ENCODE measurements at regions of chr5 and their contacts with region 1.

Region 1: DNA sequence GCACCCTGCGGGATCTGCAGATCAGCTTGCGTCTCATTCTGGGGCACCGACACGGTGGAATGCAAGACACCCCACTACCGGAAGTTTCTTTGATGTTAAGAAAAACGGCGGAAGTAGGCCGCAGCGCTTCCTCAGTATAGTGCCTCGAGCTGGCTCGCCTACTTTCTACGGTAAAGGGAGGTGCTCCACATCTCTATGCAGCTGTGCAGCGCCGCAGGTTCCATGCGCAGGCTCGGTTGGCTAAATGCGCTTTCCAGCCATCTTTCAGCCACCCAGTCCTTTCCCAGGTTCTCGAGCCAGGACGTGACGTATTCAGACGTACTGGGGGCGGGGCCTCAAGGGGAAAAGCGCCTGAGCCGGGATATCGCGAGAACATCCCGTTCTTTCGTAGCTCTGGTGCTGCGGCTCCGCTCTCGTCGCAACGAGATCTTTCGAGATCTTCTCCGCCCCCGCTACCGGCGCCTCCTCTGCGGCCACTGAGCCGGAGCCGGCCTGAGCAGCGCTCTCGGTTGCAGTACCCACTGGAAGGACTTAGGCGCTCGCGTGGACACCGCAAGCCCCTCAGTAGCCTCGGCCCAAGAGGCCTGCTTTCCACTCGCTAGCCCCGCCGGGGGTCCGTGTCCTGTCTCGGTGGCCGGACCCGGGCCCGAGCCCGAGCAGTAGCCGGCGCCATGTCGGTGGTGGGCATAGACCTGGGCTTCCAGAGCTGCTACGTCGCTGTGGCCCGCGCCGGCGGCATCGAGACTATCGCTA is at the start of gene HSPA4:
- DNase-seq: peak; percentile 93 to 100 (median 97)
- ATAC-seq: peak; percentile 89
- H3K4me3 ChIP-seq: peak within 1 kb of the TSS; percentile 88 to 100
- H3K4me3 Mint-ChIP-seq: peak within 1 kb of the TSS; percentile 99
- H3K27ac ChIP-seq: peak within 1 kb of the TSS; percentile 97
- H3K27ac Mint-ChIP-seq: peak within 1 kb of the TSS; percentile 100
- H3K4me1 ChIP-seq: peaks cover 46% of the 10 kb centered on the region
- H3K4me1 Mint-ChIP-seq: peaks cover 56% of the 10 kb centered on the region
- H3K27me3 ChIP-seq: no peaks in the 10 kb centered on the region
- H3K27me3 Mint-ChIP-seq: no peaks in the 10 kb centered on the region
- CTCF ChIP-seq: no peak
- total RNA-seq, gene HSPA4: 24.4 to 29.7 TPM

Region 2: GRCh38 chr5:131634996-131635754 is 1416.6 kb before region 1 on chr5 and contains the start of gene RAPGEF6:
- CTCF ChIA-PET with region 1: no interaction called
- POLR2A ChIA-PET with region 1: no interaction called
- intact Hi-C with region 1: loop called in 1 of 2 experiments (anchors 10 kb)
- DNase-seq: peak; percentile 91 to 100 (median 95)
- ATAC-seq: peak; percentile 83
- H3K4me3 ChIP-seq: peak within 1 kb of the TSS; percentile 83
- H3K4me3 Mint-ChIP-seq: peak within 1 kb of the TSS; percentile 96
- H3K27ac ChIP-seq: peak within 1 kb of the TSS; percentile 94 to 98
- H3K27ac Mint-ChIP-seq: peak within 1 kb of the TSS; percentile 99
- H3K4me1 ChIP-seq: peaks cover 61% of the 10 kb centered on the region
- H3K4me1 Mint-ChIP-seq: peaks cover 34% of the 10 kb centered on the region
- H3K27me3 ChIP-seq: no peaks in the 10 kb centered on the region
- H3K27me3 Mint-ChIP-seq: no peaks in the 10 kb centered on the region
- CTCF ChIP-seq: no peak
- total RNA-seq, gene RAPGEF6: 64.3 to 71.7 TPM

Region 3: DNA sequence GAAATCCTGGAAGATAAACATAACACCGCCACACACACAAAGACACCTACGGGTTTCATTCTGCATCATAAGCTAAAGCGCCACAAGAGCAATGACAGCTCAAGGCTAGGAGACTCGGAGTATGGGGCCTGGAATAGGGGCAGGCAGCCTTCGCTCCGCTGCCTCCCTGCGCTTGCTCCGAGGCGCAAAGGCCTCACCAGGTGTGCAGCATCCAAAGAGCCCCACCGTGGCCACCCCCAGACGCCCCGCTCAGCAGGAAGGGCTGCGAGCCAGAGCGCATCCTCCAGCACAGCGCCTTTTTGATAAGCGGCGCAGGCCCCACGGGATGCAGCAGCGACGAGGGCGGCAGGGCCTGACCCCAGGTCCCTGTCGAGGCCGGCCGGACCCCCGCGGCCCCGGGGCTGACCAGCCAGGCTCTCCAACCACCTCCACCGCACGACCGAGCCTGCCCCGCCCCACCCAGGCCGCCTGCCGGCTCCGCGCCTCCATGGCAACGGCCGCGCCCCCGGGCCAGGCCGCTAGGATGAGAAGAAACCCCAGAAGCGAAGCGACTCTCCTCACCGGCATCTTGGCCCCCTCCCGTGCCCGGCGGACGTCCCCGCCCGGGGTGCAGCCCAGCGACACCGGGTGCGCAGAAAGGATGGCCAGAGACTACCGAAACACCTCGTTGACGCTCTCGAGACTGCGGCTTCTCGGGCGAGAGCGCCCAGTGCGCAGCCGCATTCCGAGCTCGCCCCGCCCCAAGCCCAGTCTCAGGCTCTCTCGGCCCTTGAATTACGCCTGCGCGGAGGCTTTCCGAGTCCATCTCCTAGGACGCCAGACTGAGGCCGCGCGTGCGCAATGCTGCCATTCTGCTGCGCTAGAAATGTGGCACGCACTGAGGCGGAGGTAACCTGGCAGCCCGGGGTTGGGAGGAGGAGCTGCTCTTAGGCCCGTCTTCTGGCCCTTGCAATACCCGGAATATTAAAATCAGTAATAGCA is 314.6 kb before region 1 on chr5 and contains the start of gene KIF3A:
- CTCF ChIA-PET with region 1: no interaction called
- POLR2A ChIA-PET with region 1: no interaction called
- intact Hi-C with region 1: loop called (anchors 5 kb)
- DNase-seq: peak; percentile 94 to 99 (median 99)
- ATAC-seq: peak; percentile 89
- H3K4me3 ChIP-seq: peak within 1 kb of the TSS; percentile 80 to 85
- H3K4me3 Mint-ChIP-seq: peak within 1 kb of the TSS; percentile 94
- H3K27ac ChIP-seq: peak within 1 kb of the TSS; percentile 83
- H3K27ac Mint-ChIP-seq: peak within 1 kb of the TSS; percentile 93
- H3K4me1 ChIP-seq: peaks cover 15% of the 10 kb centered on the region
- H3K4me1 Mint-ChIP-seq: peaks cover 30% of the 10 kb centered on the region
- H3K27me3 ChIP-seq: no peaks in the 10 kb centered on the region
- H3K27me3 Mint-ChIP-seq: no peaks in the 10 kb centered on the region
- CTCF ChIP-seq: peak; percentile 30
- total RNA-seq, gene KIF3A: 13.0 to 14.8 TPM

Region 4: DNA sequence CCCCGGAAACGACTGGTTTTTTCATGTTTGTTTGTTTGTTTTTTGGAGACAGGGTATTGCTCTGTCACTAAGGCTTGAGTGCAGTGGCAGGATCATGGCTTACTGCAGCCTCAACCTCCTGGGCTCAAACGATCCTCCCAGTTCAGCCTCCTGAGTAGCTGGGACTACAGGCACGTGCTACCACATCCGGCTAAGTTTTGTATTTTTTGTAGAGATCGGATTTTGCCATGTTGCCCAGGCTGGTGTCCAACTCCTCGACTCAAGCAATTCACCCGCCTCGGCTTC is 63.7 kb before region 1 on chr5:
- CTCF ChIA-PET with region 1: no interaction called
- POLR2A ChIA-PET with region 1: no interaction called
- intact Hi-C with region 1: no loop called
- DNase-seq: no peak
- ATAC-seq: no peak
- H3K4me3 ChIP-seq: no peak overlapping the region
- H3K4me3 Mint-ChIP-seq: no peak overlapping the region
- H3K27ac ChIP-seq: no peak overlapping the region
- H3K27ac Mint-ChIP-seq: no peak overlapping the region
- H3K4me1 ChIP-seq: no peaks in the 10 kb centered on the region
- H3K4me1 Mint-ChIP-seq: no peaks in the 10 kb centered on the region
- H3K27me3 ChIP-seq: no peaks in the 10 kb centered on the region
- H3K27me3 Mint-ChIP-seq: peaks cover 4% of the 10 kb centered on the region
- CTCF ChIP-seq: no peak

Region 5: GRCh38 chr5:133025804-133026663 is 25.7 kb before region 1 on chr5 and contains the start of gene ZCCHC10:
- CTCF ChIA-PET with region 1: no interaction called
- POLR2A ChIA-PET with region 1: interaction called, 8 read pairs
- intact Hi-C with region 1: loop called (anchors 1 kb)
- DNase-seq: peak; percentile 82 to 95 (median 92)
- ATAC-seq: peak; percentile 99
- H3K4me3 ChIP-seq: peak within 1 kb of the TSS; percentile 98 to 100
- H3K4me3 Mint-ChIP-seq: peak within 1 kb of the TSS; percentile 97
- H3K27ac ChIP-seq: peak within 1 kb of the TSS; percentile 86 to 95
- H3K27ac Mint-ChIP-seq: peak within 1 kb of the TSS; percentile 94
- H3K4me1 ChIP-seq: peaks cover 4% of the 10 kb centered on the region
- H3K4me1 Mint-ChIP-seq: peaks cover 25% of the 10 kb centered on the region
- H3K27me3 ChIP-seq: no peaks in the 10 kb centered on the region
- H3K27me3 Mint-ChIP-seq: no peaks in the 10 kb centered on the region
- CTCF ChIP-seq: no peak
- total RNA-seq, gene ZCCHC10: 22.3 to 22.7 TPM

Region 6: GRCh38 chr5:134845852-134846640 is 1794.3 kb after region 1 on chr5 and contains the start of gene C5orf24:
- CTCF ChIA-PET with region 1: no interaction called
- POLR2A ChIA-PET with region 1: no interaction called
- intact Hi-C with region 1: loop called in 1 of 2 experiments (anchors 10 kb)
- DNase-seq: peak; percentile 82 to 98 (median 90)
- ATAC-seq: peak; percentile 92
- H3K4me3 ChIP-seq: peak within 1 kb of the TSS; percentile 85 to 94
- H3K4me3 Mint-ChIP-seq: peak within 1 kb of the TSS; percentile 87
- H3K27ac ChIP-seq: peak within 1 kb of the TSS; percentile 84 to 91
- H3K27ac Mint-ChIP-seq: peak within 1 kb of the TSS; percentile 94
- H3K4me1 ChIP-seq: peaks cover 18% of the 10 kb centered on the region
- H3K4me1 Mint-ChIP-seq: peaks cover 34% of the 10 kb centered on the region
- H3K27me3 ChIP-seq: no peaks in the 10 kb centered on the region
- H3K27me3 Mint-ChIP-seq: no peaks in the 10 kb centered on the region
- CTCF ChIP-seq: no peak
- total RNA-seq, gene C5orf24: 29.9 to 31.0 TPM

Measured in CD8-positive, alpha-beta T cell (primary cell).